ENCODE measurements at regions of chr1 and their contacts with region 1.

Region 1: DNA sequence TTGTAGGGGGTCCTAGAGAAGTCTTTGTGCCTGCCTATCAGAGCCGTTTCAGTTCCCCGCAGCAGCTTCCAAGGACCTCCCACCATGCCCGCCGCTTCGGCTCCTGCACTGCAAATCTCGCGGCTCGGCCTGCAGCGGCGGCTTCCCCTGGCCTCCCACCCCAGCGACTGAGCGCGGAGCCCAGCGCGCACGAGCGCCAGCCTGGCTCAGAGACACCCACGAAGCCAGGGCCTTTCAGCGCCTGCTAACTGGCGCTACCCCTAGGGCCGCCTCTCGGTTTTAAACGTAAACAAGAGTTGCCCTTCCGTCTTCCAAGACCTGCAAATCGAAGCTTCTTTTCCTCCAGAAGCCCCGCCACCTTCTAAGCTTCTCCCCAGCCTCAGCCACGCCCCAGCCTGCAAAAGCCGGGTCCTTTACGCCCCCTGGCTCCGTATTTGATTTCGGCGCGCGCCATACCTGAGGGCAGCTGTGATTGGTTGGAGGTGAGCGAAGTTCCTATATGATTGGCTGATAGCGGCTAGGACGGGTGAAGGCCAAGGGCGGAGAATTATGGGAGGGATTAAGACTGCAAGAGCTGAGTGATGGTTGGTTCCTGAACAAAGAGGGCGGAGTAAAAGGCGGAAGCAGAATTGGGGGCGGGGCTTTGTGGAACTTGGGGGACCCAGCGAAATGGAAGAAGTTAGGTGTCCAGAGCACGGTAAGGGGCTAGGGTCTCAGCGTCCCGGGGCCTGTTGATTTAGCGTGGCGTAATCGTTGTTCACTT is at the start of gene TTF2:
- DNase-seq: peak; percentile 98 to 100 (median 99)
- ATAC-seq: peak; percentile 95
- H3K4me3 ChIP-seq: peak within 1 kb of the TSS; percentile 76
- H3K27ac ChIP-seq: peak within 1 kb of the TSS; percentile 92
- H3K4me1 ChIP-seq: peaks cover 10 to 14% of the 10 kb centered on the region in 2 experiments
- H3K27me3 ChIP-seq: no peaks in the 10 kb centered on the region
- CTCF ChIP-seq: peak; percentile 34 to 46 (median 45); a peak in 4 of 6 replicates
- EP300 ChIP-seq: 0 out of 2 replicates have a peak, but pooled peaks have one; percentile 6
- POLR2A ChIP-seq: peak; percentile 96
- RAD21 ChIP-seq: no peak; a peak in 2 of 4 replicates
- polyA plus RNA-seq, gene TTF2: 9.4 to 10.5 TPM

Region 2: DNA sequence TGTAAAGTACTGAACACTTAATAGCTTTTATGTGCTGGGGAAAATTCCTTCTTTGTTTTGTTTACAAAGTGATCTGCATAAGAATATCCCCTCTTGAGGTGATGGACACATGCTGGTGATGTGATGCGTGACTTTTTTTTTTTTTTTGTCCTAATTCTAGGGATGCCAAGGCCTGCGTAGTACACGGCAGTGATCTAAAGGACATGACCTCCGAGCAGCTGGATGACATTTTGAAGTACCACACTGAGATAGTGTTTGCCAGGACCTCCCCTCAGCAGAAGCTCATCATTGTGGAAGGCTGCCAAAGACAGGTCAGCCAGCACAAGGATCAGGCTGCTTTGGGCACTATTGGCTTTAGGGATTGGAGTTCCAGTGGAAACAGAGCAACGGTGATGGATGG is 662.1 kb before region 1 on chr1:
- CTCF ChIA-PET with region 1: no interaction called
- POLR2A ChIA-PET with region 1: no interaction called
- in situ Hi-C with region 1: no loop called
- intact Hi-C with region 1: no loop called
- DNase-seq: no peak
- ATAC-seq: no peak
- H3K4me3 ChIP-seq: no peak overlapping the region
- H3K27ac ChIP-seq: no peak overlapping the region
- H3K4me1 ChIP-seq: peaks cover 0 to 11% of the 10 kb centered on the region in 2 experiments; a peak in 3 of 5 replicates
- H3K27me3 ChIP-seq: no peaks in the 10 kb centered on the region
- CTCF ChIP-seq: no peak
- EP300 ChIP-seq: no peak
- POLR2A ChIP-seq: no peak
- RAD21 ChIP-seq: no peak

Region 3: DNA sequence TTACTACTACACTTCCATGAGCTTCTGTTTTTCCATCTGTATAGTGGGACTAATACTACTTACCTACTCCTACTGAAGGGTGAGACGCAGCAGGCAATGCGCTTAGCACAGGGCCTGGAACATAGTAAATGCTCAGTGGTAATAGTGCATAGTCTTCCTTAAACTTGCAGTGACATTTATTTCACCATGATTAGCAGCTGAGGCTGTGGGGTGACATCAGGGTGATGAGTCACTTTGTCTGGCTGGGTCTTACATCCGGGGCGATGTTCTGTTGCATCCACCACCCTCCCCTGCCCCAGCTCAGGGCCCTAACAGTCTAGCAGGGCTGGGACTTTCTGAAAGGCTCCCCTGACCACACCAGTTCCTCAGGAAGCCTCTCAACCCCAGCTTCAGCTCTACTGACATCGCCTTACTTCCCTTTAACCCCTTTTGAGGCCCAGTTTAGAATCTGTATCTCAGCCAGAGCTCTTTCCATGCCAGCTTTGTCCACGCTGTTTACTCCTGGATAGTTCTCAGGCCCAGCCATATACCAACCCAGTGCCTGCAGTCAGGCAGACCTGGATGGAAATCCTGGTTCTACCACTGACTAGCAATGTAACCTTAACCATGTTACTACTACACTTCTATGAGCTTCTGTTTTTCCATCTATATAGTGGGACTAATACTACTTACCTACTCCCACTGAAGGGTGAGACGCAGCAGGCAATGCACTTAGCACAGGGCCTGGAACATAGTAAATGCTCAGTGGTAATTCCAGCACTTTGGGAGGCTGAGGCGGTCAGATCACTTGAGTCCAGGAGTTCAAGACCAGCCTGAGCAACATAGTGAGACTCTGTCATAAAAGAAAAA is 555.3 kb before region 1 on chr1:
- CTCF ChIA-PET with region 1: no interaction called
- POLR2A ChIA-PET with region 1: interaction called, 4 read pairs
- in situ Hi-C with region 1: loop called (anchors 5 kb)
- intact Hi-C with region 1: loop called (anchors 10 kb)
- DNase-seq: peak; percentile 90 to 97 (median 93)
- ATAC-seq: peak; percentile 91
- H3K4me3 ChIP-seq: no peak overlapping the region
- H3K27ac ChIP-seq: peak overlapping the region; percentile 99
- H3K4me1 ChIP-seq: peaks cover 45 to 82% of the 10 kb centered on the region in 2 experiments
- H3K27me3 ChIP-seq: no peaks in the 10 kb centered on the region
- CTCF ChIP-seq: no peak
- EP300 ChIP-seq: peak; percentile 80
- POLR2A ChIP-seq: peak; percentile 60
- RAD21 ChIP-seq: peak in 1 of 2 experiments; percentile 36; a peak in 1 of 4 replicates

Region 4: DNA sequence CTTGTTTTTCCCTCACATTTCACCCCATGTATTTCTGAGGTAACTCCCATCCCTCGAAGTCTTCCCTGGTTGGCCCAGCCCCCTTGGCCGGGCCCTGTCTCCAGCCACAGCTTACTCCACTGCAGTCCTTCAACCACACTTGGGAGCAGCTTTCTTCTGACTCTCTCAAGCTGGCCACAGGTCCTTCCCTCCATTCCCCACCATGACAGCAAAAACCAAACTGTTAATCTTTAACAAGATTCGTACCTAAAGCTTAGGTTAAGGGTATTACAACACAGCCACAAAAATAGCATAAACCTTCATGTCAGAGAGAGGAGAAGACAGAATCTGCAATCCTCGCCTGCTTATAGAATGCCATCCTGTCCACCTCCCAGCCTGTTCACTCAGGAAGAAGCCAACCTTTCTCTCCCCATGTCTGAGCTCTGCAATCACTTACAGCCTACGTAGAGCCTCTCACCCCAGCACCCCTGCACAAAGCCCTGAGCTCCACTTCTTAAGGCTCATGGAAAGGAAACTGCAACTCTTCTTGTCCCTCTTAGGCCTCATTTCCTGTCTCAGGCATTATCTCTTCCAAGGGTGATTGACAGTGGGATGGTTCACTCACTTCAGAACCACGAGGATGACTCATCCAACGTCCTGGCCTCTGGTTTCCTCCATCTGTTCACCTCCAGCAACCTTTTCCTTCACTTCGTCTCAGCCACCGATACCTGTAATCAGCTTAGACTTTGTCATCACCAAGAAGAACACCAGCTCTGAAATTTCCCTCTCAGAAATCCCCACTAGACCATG is 232.8 kb before region 1 on chr1:
- CTCF ChIA-PET with region 1: no interaction called
- POLR2A ChIA-PET with region 1: interaction called, 4 read pairs
- in situ Hi-C with region 1: no loop called
- intact Hi-C with region 1: loop called (anchors 2 kb)
- DNase-seq: peak; percentile 79 to 97 (median 86)
- ATAC-seq: peak; percentile 81
- H3K4me3 ChIP-seq: peak overlapping the region; percentile 26
- H3K27ac ChIP-seq: peak overlapping the region; percentile 94
- H3K4me1 ChIP-seq: peaks cover 24 to 54% of the 10 kb centered on the region in 2 experiments
- H3K27me3 ChIP-seq: no peaks in the 10 kb centered on the region
- CTCF ChIP-seq: no peak
- EP300 ChIP-seq: peak; percentile 94
- POLR2A ChIP-seq: peak; percentile 85
- RAD21 ChIP-seq: no peak; a peak in 1 of 4 replicates

Region 5: GRCh38 chr1:116881879-116882520 is 177.9 kb before region 1 on chr1:
- CTCF ChIA-PET with region 1: interaction called, 3 read pairs
- POLR2A ChIA-PET with region 1: interaction called, 3 read pairs
- in situ Hi-C with region 1: no loop called
- intact Hi-C with region 1: loop called (anchors 5 kb)
- DNase-seq: peak; percentile 57 to 85 (median 70)
- ATAC-seq: peak; percentile 92
- H3K4me3 ChIP-seq: no peak overlapping the region
- H3K27ac ChIP-seq: peak overlapping the region; percentile 58
- H3K4me1 ChIP-seq: peaks cover 23 to 36% of the 10 kb centered on the region in 2 experiments
- H3K27me3 ChIP-seq: no peaks in the 10 kb centered on the region
- CTCF ChIP-seq: peak; percentile 86 to 88 (median 88)
- EP300 ChIP-seq: peak; percentile 51
- POLR2A ChIP-seq: no peak
- RAD21 ChIP-seq: peak; percentile 88 to 93

Region 6: GRCh38 chr1:117026361-117026760 is 33.5 kb before region 1 on chr1:
- CTCF ChIA-PET with region 1: no interaction called
- POLR2A ChIA-PET with region 1: no interaction called
- in situ Hi-C with region 1: no loop called
- intact Hi-C with region 1: no loop called
- DNase-seq: no peak
- ATAC-seq: no peak
- H3K4me3 ChIP-seq: no peak overlapping the region
- H3K27ac ChIP-seq: no peak overlapping the region
- H3K4me1 ChIP-seq: peaks cover 0 to 4% of the 10 kb centered on the region in 2 experiments; a peak in 2 of 5 replicates
- H3K27me3 ChIP-seq: peaks cover 6 to 24% of the 10 kb centered on the region in 2 experiments
- CTCF ChIP-seq: no peak
- EP300 ChIP-seq: no peak
- POLR2A ChIP-seq: no peak
- RAD21 ChIP-seq: no peak

Region 7: DNA sequence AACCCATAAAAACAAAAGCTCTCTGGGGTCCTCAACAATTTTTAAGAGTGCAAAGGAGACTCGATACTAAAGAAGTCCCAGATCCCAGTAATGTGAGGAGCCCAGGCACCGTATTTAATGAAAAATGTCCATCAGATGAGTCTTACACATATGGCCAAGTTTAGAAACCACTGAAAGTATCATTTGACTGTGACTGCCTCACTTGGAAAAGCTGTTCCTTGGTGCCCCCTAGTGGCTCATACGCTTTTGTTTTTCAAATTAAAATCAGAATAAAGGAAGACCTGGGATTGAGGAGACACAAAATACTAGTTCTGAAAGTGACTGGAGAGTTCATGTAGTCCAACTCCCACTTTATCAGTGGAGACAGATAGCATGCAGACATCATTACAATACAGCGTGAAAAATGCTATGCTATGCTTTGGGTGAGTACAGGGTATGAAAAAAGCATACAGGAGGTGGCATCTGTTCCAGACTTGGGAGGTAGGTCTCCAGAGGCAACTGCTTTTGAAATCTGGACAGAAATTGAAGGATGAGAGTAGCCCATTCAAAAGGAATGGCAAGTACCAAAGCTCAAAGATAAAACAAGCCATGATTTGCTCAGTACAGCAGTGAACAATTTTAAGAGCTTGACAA is 835.7 kb after region 1 on chr1:
- CTCF ChIA-PET with region 1: no interaction called
- POLR2A ChIA-PET with region 1: no interaction called
- in situ Hi-C with region 1: no loop called
- intact Hi-C with region 1: loop called (anchors 10 kb)
- DNase-seq: peak; percentile 53 to 83 (median 54)
- ATAC-seq: peak; percentile 79
- H3K4me3 ChIP-seq: no peak overlapping the region
- H3K27ac ChIP-seq: no peak overlapping the region
- H3K4me1 ChIP-seq: no peaks in the 10 kb centered on the region
- H3K27me3 ChIP-seq: no peaks in the 10 kb centered on the region
- CTCF ChIP-seq: peak; percentile 73 to 90 (median 82)
- EP300 ChIP-seq: no peak
- POLR2A ChIP-seq: no peak
- RAD21 ChIP-seq: peak; percentile 74 to 84

Measured in K562 (cell line).